Heart right ventricle (tissue), 16 donors: ENCODE measurements at regions of chr12 and their contacts with region 1.

Region 1: GRCh38 chr12:110141389-110141788 is 17.2 kb downstream of the IFT81 start:
- DNase-seq: peak; percentile 18 to 32
- ATAC-seq: peak; percentile 45 to 91 (median 74)
- H3K4me3 ChIP-seq: no peak overlapping the region
- H3K27ac ChIP-seq: peak overlapping the region in 7 of 10 donors; percentile 39 to 64 (median 54)
- H3K4me1 ChIP-seq: peaks cover 0 to 13% (median 0%) of the 10 kb centered on the region in 9 donors
- H3K27me3 ChIP-seq: no peaks in the 10 kb centered on the region
- CTCF ChIP-seq: no peak

Region 2: GRCh38 chr12:110199339-110200123 is 58.1 kb after region 1 on chr12:
- intact Hi-C with region 1: loop called in 1 of 10 experiments (anchors 10 kb)
- DNase-seq: no peak
- ATAC-seq: peak in 1 of 8 donors; percentile 19
- H3K4me3 ChIP-seq: no peak overlapping the region
- H3K27ac ChIP-seq: no peak overlapping the region
- H3K4me1 ChIP-seq: peaks cover 0 to 11% (median 0%) of the 10 kb centered on the region in 9 donors
- H3K27me3 ChIP-seq: no peaks in the 10 kb centered on the region
- CTCF ChIP-seq: no peak